HCT116 (cell line): ENCODE measurements at regions of chr1 and their contacts with region 1.

Region 1: DNA sequence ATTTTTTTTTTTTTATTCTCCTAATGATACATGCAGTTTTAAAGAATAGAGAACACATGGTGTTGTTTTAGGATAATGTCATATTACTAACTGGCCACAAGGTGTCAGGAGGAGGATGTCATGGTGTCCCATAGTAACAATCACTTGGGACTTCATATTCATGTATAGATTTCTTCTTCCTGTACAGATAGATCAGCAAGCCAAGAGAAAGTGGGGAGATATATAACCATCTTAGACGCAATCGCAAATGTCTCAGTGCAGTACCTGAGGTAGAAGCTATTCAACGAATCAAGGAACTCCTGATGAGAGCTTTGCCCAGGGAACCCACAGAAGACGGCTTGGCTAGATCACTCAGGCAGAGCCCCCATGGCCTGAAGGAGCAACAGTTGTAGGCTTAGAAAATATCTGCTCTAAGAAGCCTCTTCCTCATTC is 12.3 kb downstream of the OR2T11 start:
- DNase-seq: peak; percentile 6
- ATAC-seq: peak; percentile 79
- H3K4me3 ChIP-seq: no peak overlapping the region
- H3K27ac ChIP-seq: no peak overlapping the region
- H3K4me1 ChIP-seq: no peaks in the 10 kb centered on the region
- H3K27me3 ChIP-seq: no peaks in the 10 kb centered on the region
- CTCF ChIP-seq: peak; percentile 38 to 59 (median 52); a peak in 5 of 6 replicates
- POLR2A ChIP-seq: no peak
- RAD21 ChIP-seq: peak; percentile 67

Region 2: DNA sequence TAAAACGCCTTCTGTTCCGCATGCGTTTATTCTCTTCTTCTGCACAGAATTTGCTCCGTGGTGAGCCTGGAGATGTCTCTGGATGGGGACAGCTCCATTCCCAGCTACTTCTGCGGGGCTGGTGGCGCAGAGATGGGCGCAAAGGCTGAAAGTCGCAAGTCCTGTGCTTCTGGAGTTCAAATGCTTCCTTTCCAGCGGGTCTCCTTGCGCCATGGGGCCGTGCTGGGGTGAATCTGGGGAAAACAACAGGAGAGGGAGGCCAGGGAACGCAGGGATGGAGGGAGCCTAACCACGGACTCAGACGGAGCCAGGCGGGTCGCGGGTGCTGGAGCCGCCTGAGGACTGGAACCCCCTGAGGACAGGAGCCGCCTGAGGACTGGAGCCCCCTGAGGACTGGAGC is 316.5 kb before region 1 on chr1:
- CTCF ChIA-PET with region 1: no interaction called
- POLR2A ChIA-PET with region 1: no interaction called
- RAD21 ChIA-PET with region 1: no interaction called
- intact Hi-C with region 1: no loop called
- DNase-seq: no peak
- ATAC-seq: no peak
- H3K4me3 ChIP-seq: no peak overlapping the region
- H3K27ac ChIP-seq: no peak overlapping the region
- H3K4me1 ChIP-seq: no peaks in the 10 kb centered on the region
- H3K27me3 ChIP-seq: no peaks in the 10 kb centered on the region
- CTCF ChIP-seq: no peak
- POLR2A ChIP-seq: no peak
- RAD21 ChIP-seq: no peak

Region 3: DNA sequence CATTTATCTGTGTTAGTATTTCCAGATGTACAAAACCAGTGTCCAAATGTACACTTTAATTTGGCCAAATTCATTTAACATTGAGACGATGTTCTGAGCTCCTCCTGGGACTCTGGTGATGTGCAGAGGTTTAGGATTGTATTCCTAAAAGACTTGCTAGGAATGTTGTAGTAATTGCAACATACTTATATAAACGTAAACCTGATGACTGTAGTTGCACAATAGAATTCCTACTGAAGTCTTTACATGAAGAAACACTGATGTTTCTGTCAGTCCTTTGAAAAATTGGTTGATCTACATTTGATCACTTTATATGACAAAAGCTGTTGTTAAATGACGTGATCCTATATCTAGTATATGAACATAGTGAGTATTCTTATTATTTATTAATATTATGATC is 279.1 kb before region 1 on chr1:
- CTCF ChIA-PET with region 1: no interaction called
- POLR2A ChIA-PET with region 1: no interaction called
- RAD21 ChIA-PET with region 1: no interaction called
- intact Hi-C with region 1: no loop called
- DNase-seq: no peak
- ATAC-seq: no peak
- H3K4me3 ChIP-seq: no peak overlapping the region
- H3K27ac ChIP-seq: no peak overlapping the region
- H3K4me1 ChIP-seq: no peaks in the 10 kb centered on the region
- H3K27me3 ChIP-seq: no peaks in the 10 kb centered on the region
- CTCF ChIP-seq: no peak
- POLR2A ChIP-seq: no peak
- RAD21 ChIP-seq: no peak

Region 4: GRCh38 chr1:248404024-248404423 is 218.6 kb before region 1 on chr1:
- CTCF ChIA-PET with region 1: no interaction called
- POLR2A ChIA-PET with region 1: no interaction called
- RAD21 ChIA-PET with region 1: no interaction called
- intact Hi-C with region 1: no loop called
- DNase-seq: peak; percentile 3
- ATAC-seq: no peak
- H3K4me3 ChIP-seq: no peak overlapping the region
- H3K27ac ChIP-seq: no peak overlapping the region
- H3K4me1 ChIP-seq: no peaks in the 10 kb centered on the region
- H3K27me3 ChIP-seq: no peaks in the 10 kb centered on the region
- CTCF ChIP-seq: peak in 1 of 3 experiments; percentile 19; a peak in 1 of 6 replicates
- POLR2A ChIP-seq: no peak
- RAD21 ChIP-seq: no peak

Region 5: DNA sequence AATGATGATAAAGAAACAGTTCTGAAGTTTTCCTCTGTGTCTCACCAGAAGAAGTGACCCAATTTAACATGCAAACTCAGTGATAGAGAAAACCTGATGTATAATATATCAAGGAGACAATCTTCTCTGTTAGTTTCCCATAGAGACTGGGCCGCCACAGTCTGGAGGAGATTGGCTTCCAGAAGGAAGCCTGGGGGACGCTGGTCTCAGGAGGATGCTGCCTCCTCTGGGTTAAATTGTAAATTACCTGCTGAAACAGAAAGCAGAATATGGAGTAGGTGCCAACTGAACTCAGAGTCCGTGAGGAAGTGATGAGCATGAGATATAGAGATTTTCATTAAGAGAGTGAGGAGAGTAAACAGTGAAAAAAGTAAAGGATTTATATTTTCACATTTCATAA is 64.2 kb after region 1 on chr1:
- CTCF ChIA-PET with region 1: no interaction called
- POLR2A ChIA-PET with region 1: no interaction called
- RAD21 ChIA-PET with region 1: no interaction called
- intact Hi-C with region 1: loop called (anchors 5 kb)
- DNase-seq: no peak
- ATAC-seq: peak; percentile 80
- H3K4me3 ChIP-seq: no peak overlapping the region
- H3K27ac ChIP-seq: no peak overlapping the region
- H3K4me1 ChIP-seq: no peaks in the 10 kb centered on the region
- H3K27me3 ChIP-seq: no peaks in the 10 kb centered on the region
- CTCF ChIP-seq: peak in 2 of 3 experiments; percentile 35 to 39; a peak in 3 of 6 replicates
- POLR2A ChIP-seq: no peak
- RAD21 ChIP-seq: peak; percentile 51